ENCODE measurements at regions of chr9 and their contacts with region 1.

Region 1: GRCh38 chr9:126460288-126460843 is 133.7 kb downstream of the MVB12B start:
- DNase-seq: no peak
- H3K4me3 ChIP-seq: no peak overlapping the region
- CTCF ChIP-seq: no peak

Region 2: DNA sequence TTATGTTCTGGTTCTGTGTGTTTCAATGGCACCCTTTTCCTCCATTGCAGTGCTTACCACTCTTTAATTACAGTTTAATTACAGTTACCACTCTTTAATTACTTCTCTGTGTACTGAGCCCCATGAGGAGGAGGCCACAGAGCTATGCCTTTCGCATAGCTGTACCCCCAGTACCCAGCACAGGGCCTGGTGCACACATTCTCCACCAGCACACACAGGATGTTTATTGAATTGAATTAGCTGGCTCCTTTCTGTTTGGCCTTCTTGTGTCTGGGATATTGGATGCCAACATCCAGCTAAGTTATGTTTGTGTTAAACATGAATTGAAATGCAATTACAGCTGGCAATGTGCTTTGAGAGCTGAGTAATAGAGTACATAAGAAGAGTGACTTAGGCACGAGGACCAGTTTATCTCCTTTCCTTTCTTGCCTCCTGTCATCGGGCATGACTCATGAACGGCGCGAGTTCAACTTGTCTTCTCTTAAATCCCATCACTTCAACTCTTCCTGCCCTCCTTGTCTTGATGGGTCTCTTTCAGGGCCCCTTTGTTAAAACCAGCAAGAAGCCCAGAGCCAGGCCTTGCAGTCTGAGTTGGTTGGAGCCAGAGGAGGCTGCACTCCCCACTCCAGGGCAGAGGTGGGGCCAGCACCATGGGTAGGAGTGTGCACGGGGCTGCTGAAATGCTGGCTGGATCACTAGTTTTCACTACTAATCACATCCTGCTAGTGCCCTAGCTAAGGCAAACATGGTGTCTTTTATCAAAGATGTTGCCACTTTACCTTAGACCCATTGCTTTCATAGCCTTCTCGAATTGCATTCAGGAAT is 96.3 kb before region 1 on chr9:
- in situ Hi-C with region 1: loop called (anchors 5 kb)
- DNase-seq: no peak
- H3K4me3 ChIP-seq: no peak overlapping the region
- CTCF ChIP-seq: no peak

Region 3: DNA sequence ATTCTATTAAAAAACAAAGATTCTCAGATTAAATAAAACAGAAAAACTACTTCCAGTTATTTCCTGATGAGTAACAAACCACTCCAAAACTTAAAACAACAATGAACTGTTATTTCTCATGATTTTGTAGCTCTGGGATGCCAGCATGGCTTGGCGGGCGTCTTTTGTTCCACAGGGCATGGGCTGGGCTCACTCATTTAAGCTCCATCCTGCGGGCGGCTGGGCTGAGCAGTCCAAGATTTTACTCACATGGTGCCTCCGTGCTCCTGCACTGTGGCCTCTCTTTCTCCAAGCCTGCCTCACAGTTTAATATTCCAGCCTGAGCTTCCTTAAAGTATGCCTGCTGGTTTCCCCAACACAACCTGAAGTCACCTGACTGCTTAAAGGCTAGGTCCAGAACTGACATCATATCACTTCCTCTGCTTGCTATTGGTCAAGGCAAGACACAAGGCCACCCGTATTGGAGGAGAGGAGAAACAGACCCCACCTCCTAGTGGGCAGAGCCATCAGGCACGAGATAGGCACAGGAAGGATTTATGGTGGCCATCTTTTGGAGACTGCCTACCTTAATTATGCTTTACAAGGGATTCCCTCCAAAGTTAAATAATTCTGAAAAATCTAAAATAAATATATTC is 302.9 kb after region 1 on chr9:
- in situ Hi-C with region 1: no loop called
- DNase-seq: peak; percentile 5
- H3K4me3 ChIP-seq: peak overlapping the region; percentile 2
- CTCF ChIP-seq: no peak

Measured in astrocyte of the cerebellum (primary cell).